PC-9 (cell line): ENCODE measurements at regions of chr2 and their contacts with region 1.

Region 1: GRCh38 chr2:205685314-205686055 is 3.2 kb downstream of the NRP2 start:
- DNase-seq: peak; percentile 57 to 63
- H3K4me3 ChIP-seq: peak overlapping the region; percentile 75
- H3K27ac ChIP-seq: peak overlapping the region; percentile 78
- H3K4me1 ChIP-seq: no peaks in the 10 kb centered on the region; the same call in 1 of the 2 replicates
- H3K27me3 ChIP-seq: no peaks in the 10 kb centered on the region
- CTCF ChIP-seq: no peak

Region 2: DNA sequence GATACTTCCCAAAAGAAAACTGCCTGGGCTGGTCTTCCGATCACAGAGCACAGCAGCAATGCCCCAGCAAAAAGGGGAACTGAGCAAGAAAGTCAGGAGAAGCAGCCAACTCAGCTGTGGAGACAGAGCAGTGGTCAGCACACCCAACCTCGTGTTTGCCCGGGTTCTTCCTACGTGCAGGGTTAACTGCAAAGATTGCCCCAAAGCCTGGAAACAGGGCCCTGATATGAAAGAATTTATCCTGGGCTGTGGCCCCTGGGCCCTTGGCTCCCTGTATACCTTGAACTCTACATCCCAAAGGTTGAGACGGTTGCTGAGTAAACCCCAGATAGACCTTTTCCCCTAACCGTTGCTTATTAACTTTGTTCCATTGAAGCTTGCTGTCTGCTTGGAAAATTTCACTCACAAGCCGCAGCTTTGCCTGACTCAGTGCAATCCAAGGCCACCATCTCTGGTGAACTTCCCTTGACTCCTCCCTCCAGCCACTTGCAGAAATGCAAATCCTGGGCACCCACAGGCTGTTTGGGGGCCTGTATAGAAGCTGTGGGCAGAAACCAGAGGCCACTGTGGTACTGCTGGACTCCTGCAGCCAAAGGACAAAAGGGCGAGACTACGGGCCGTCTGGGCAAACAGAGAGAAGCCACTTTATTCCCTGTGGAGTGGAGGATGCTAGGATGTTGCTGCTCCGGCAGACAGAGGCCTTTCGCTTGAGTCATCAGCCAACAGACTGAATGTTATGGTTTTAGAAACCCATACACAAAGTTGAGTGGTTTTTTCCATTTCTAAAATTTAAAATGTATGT is 15.0 kb after region 1 on chr2:
- CTCF ChIA-PET with region 1: no interaction called
- POLR2A ChIA-PET with region 1: interaction called, 5 read pairs
- intact Hi-C with region 1: loop called (anchors 2 kb)
- DNase-seq: peak in 1 of 2 experiments; percentile 51
- H3K4me3 ChIP-seq: no peak overlapping the region
- H3K27ac ChIP-seq: peak overlapping the region; percentile 64
- H3K4me1 ChIP-seq: peaks cover 25% of the 10 kb centered on the region
- H3K27me3 ChIP-seq: no peaks in the 10 kb centered on the region
- CTCF ChIP-seq: no peak

Region 3: GRCh38 chr2:205739620-205740019 is 54.1 kb after region 1 on chr2:
- CTCF ChIA-PET with region 1: no interaction called
- POLR2A ChIA-PET with region 1: interaction called, 11 read pairs
- intact Hi-C with region 1: no loop called
- DNase-seq: no peak
- H3K4me3 ChIP-seq: no peak overlapping the region
- H3K27ac ChIP-seq: no peak overlapping the region
- H3K4me1 ChIP-seq: peaks cover 20% of the 10 kb centered on the region
- H3K27me3 ChIP-seq: no peaks in the 10 kb centered on the region
- CTCF ChIP-seq: no peak

Region 4: DNA sequence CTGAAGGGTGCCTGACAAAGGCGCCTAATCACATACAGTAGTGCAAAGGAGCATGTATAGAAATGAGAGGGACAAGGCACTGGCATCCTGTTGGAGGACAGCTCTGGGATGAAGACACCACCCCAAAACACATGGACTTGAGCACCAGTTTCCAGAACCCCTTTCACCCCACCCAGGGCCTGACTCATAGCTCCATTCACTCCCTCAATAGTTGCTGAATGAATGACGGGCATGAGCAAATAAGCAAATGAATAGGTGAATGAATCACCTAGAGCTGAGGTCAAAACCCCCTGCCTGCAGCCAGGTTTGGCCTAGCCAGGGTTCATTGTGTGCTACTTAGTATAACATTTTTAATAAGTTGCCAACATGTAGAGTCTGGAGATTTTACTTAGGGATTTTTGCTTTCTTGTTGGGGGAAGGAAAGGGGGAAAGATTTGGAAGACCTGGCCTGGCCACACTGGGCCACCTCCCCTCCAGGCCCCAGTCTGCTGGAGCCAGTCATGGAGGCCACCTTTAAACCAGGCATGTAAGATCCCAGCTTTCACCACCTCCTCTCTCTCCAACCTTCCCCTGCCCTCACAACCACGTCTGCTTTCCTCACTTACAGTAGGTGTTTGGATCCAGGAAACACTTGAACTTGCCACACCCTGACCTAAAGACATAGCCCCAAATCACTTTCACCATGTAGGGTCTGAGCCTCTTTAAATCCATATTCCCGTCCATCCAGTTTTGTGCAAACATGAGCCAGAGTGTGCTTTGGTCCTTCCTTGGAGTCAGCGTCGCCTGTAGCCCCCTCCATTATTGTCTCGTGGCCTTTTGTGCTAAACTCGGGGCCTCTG is 63.4 kb after region 1 on chr2:
- CTCF ChIA-PET with region 1: no interaction called
- POLR2A ChIA-PET with region 1: no interaction called
- intact Hi-C with region 1: loop called (anchors 2 kb)
- DNase-seq: peak; percentile 65 to 93
- H3K4me3 ChIP-seq: peak overlapping the region; percentile 12; the same call in 1 of the 2 replicates
- H3K27ac ChIP-seq: peak overlapping the region; percentile 95
- H3K4me1 ChIP-seq: peaks cover 87% of the 10 kb centered on the region
- H3K27me3 ChIP-seq: no peaks in the 10 kb centered on the region
- CTCF ChIP-seq: no peak